ENCODE measurements at regions of chr10 and their contacts with region 1.

Region 1: GRCh38 chr10:112858986-112859651 is 90.9 kb upstream of the TCF7L2 start:
- DNase-seq: peak; percentile 63
- H3K4me3 ChIP-seq: no peak overlapping the region
- H3K27ac ChIP-seq: no peak overlapping the region
- H3K4me1 ChIP-seq: no peaks in the 10 kb centered on the region
- H3K27me3 ChIP-seq: peaks cover 0 to 8% of the 10 kb centered on the region in 2 experiments
- CTCF ChIP-seq: no peak
- POLR2A ChIP-seq: no peak

Region 2: DNA sequence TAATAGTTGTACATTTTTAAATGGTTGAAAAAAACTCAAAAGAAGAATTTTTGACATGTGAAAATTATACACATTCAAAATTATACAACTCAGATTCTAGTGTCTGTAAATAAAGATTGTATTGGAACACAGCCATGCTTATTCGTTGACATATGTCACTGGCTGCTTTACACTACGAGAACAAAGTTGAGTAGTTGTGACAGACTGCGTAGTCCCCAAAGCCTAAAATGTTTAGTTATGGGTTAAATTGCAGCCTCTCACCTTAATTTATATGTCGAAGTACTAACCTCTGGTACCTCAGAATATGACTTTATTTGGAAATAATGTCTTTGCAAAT is 53.9 kb before region 1 on chr10:
- CTCF ChIA-PET with region 1: no interaction called
- POLR2A ChIA-PET with region 1: interaction called, 17 read pairs
- dilution Hi-C with region 1: no loop called
- intact Hi-C with region 1: no loop called
- DNase-seq: no peak
- H3K4me3 ChIP-seq: no peak overlapping the region
- H3K27ac ChIP-seq: no peak overlapping the region
- H3K4me1 ChIP-seq: no peaks in the 10 kb centered on the region
- H3K27me3 ChIP-seq: no peaks in the 10 kb centered on the region
- CTCF ChIP-seq: no peak
- POLR2A ChIP-seq: no peak